Activated CD4-positive, alpha-beta T cell treated with anti-CD3 and anti-CD28 coated beads for 36 hours (primary cell): ENCODE measurements at regions of chr3 and their contacts with region 1.

Region 1: GRCh38 chr3:128787256-128788240 is 61.6 kb downstream of the RAB7A start:
- DNase-seq: peak; percentile 62
- ATAC-seq: peak; percentile 73
- H3K4me3 Mint-ChIP-seq: peak overlapping the region; percentile 73
- H3K27ac Mint-ChIP-seq: peak overlapping the region; percentile 100
- H3K4me1 Mint-ChIP-seq: peaks cover 97% of the 10 kb centered on the region
- H3K27me3 Mint-ChIP-seq: no peaks in the 10 kb centered on the region

Region 2: DNA sequence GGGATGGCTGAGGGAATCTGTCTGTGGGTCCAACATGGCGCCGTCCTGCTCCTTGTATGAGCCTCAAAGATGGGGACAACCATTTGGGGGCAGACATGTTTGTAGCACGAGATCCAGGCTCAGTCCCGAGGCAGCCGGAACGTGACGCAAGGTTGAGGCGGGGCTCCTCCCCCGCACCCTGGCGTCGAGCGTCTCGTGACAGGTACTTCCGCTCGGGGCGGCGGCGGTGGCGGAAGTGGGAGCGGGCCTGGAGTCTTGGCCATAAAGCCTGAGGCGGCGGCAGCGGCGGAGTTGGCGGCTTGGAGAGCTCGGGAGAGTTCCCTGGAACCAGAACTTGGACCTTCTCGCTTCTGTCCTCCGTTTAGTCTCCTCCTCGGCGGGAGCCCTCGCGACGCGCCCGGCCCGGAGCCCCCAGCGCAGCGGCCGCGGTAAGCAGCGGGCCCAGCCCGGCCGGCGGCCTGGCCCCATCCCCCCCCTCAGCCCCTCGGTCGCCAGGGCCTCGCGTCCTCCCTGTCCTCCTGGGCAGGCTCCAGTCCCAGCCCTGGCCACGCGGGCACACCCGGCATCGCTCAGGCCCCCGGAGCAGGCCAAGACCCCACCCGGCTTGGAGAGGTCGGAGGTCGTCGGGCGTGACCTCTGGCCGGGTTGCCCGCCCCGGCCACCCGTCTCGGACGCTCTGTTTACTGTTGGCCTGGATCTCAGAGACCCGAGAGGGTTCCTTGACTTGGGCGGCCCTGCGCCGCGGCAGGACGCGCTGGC is 61.4 kb before region 1 on chr3 and contains the start of gene RAB7A:
- CTCF ChIA-PET with region 1: interaction called, 8 read pairs
- POLR2A ChIA-PET with region 1: interaction called, 7 read pairs
- intact Hi-C with region 1: loop called (anchors 1 kb)
- DNase-seq: peak; percentile 99
- ATAC-seq: peak; percentile 92
- H3K4me3 Mint-ChIP-seq: peak within 1 kb of the TSS; percentile 89
- H3K27ac Mint-ChIP-seq: peak within 1 kb of the TSS; percentile 92
- H3K4me1 Mint-ChIP-seq: peaks cover 52% of the 10 kb centered on the region
- H3K27me3 Mint-ChIP-seq: no peaks in the 10 kb centered on the region
- total RNA-seq, gene RAB7A: 297 to 534 TPM

Region 3: GRCh38 chr3:128804017-128804810 is 16.7 kb after region 1 on chr3:
- CTCF ChIA-PET with region 1: interaction called, 80 read pairs
- POLR2A ChIA-PET with region 1: interaction called, 14 read pairs
- intact Hi-C with region 1: loop called (anchors 1 kb)
- DNase-seq: peak; percentile 78
- ATAC-seq: peak; percentile 76
- H3K4me3 Mint-ChIP-seq: peak overlapping the region; percentile 69
- H3K27ac Mint-ChIP-seq: peak overlapping the region; percentile 97
- H3K4me1 Mint-ChIP-seq: peaks cover 86% of the 10 kb centered on the region
- H3K27me3 Mint-ChIP-seq: no peaks in the 10 kb centered on the region

Region 4: DNA sequence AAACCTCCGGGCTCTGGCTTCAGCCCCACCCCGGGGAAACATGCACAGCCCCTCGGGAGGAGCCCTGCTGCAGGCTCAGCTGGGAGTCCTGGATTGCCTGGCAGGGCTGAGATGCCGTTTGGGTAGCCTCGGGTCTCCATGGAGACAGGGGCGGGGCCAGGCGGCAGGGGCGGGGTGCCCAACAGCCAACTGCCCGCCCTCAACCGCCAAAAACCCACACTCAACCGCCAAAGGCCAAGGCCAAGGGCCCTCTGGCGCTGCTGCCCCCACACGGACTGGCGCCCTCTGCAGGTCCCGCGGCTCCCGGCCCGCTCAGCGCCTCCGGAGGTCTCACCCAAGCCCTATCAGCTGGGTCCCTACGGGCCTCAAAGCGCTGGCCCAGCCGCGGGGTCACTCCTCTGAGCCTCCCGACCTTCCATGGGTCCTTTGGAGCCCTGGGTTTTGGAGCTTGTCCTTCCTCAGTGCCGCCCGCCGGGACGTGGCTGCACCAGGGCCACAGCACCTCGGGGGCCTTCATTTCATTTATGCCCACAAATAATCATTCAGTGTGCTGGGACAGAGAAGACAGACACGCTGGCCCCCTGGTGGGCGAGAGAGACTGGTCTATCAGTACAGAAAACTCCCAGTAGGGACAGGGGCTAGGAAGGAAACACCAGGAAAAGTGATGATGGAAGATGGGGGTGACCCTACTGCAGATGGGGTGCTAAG is 58.4 kb after region 1 on chr3:
- CTCF ChIA-PET with region 1: interaction called, 9 read pairs
- POLR2A ChIA-PET with region 1: no interaction called
- intact Hi-C with region 1: loop called (anchors 2 kb)
- DNase-seq: peak; percentile 93
- ATAC-seq: peak; percentile 84
- H3K4me3 Mint-ChIP-seq: peak overlapping the region; percentile 62
- H3K27ac Mint-ChIP-seq: peak overlapping the region; percentile 95
- H3K4me1 Mint-ChIP-seq: peaks cover 20% of the 10 kb centered on the region
- H3K27me3 Mint-ChIP-seq: no peaks in the 10 kb centered on the region